ENCODE measurements at regions of chr10 and their contacts with region 1.

Region 1: DNA sequence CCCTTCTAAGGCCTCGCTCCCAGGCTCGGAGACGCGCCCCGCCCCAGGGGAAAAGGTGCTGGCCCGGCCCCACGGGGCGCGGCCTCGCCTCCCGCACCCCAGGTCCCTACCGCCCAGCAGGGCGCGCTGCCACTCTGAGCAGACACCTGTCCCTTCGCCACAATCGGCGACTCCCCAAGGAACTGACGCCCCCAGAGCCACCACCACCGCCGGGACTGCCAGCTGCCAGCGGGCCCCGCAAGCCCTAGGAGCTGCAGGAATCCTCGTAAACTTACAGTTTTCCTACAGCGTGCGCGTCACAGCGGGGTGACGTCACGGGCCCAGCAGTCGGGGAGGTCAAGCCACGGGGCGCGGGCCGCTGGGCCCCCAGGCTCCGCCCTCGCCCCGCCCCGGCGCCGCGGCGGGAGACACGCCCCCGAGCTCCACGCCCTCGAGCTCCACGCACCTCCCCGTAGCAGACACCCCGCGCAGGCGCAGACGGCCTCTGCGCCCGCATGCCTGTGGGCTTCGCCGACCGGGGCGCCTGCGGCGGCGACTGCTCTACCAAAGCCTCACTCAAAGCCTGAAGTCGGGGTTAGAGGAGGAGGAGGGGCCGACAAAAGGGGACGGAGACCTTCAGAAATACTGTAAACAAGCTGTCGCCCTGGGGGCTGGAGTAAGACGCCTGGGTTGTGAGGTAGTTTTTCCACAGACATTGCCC is at the start of gene ZNF438:
- DNase-seq: peak; percentile 95
- H3K4me3 Mint-ChIP-seq: peak within 1 kb of the TSS; percentile 85
- H3K27ac Mint-ChIP-seq: peak within 1 kb of the TSS; percentile 98
- H3K4me1 Mint-ChIP-seq: peaks cover 29% of the 10 kb centered on the region
- H3K27me3 Mint-ChIP-seq: no peaks in the 10 kb centered on the region
- total RNA-seq, gene ZNF438: 6.3 to 6.5 TPM

Region 2: DNA sequence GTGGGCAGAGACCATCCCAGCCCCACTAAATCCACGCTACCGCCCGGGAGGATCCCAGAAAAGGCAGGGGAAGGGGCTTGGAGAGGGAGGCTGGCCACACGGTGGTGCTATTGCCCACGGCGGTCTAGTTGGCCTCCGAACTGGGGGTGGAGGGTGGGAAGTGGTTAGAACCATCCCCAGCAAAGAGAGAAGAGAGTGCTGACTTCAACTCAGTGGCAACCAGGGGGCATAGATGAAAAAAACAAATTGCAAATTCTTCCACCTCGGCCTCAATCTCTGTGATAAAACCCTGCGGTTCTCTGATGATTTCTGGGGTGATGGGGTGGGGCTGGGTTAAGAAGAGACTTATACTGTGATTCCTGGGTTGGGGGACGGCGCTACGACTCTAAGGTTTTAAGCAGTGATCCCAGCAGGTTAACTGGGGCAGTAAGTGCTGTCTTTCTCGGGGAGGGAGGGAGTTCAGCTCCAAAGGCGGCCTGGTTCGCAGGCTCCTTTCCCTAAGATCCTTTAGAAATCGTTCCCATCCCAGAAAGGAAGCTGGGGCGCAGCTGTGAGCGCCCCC is 247.7 kb before region 1 on chr10:
- CTCF ChIA-PET with region 1: interaction called, 22 read pairs
- POLR2A ChIA-PET with region 1: interaction called, 20 read pairs
- DNase-seq: peak; percentile 88
- H3K4me3 Mint-ChIP-seq: peak overlapping the region; percentile 73
- H3K27ac Mint-ChIP-seq: peak overlapping the region; percentile 79
- H3K4me1 Mint-ChIP-seq: peaks cover 33% of the 10 kb centered on the region
- H3K27me3 Mint-ChIP-seq: peaks cover 4% of the 10 kb centered on the region

Region 3: DNA sequence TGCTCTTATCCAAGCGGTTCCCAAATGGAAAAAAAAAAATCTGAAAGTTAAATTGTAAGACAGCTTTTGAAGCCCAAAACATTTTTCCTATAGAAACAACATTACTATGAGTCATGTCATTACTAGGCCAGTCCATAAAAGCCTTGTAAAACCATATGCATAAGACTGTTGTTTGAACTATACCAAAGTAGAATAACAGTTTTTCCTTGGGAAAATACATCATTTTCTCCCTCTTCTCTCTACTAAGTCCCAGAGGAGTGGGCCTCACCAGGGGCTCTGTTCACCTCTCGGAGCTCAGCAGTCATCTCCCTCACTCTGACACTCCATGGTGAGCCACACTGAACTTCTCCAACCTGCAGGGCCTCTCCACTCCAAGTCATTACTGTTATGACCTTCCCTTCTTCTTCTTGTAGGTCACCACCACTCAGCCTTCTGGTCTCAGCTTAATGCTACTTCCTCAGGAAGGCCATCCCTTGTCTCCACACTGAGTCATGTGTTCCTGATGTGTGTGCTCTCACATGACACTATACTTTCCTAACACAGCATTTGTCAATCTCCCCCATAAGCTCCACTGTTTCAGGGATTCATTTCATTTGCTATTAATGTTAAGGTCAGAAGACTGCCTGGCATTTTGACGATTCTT is 32.5 kb before region 1 on chr10:
- CTCF ChIA-PET with region 1: interaction called, 25 read pairs
- POLR2A ChIA-PET with region 1: interaction called, 37 read pairs
- DNase-seq: peak; percentile 22
- H3K4me3 Mint-ChIP-seq: peak overlapping the region; percentile 74
- H3K27ac Mint-ChIP-seq: peak overlapping the region; percentile 80
- H3K4me1 Mint-ChIP-seq: peaks cover 46% of the 10 kb centered on the region
- H3K27me3 Mint-ChIP-seq: no peaks in the 10 kb centered on the region

Region 4: GRCh38 chr10:31017534-31018355 is 14.0 kb before region 1 on chr10:
- CTCF ChIA-PET with region 1: interaction called, 17 read pairs
- POLR2A ChIA-PET with region 1: interaction called, 7 read pairs
- DNase-seq: no peak
- H3K4me3 Mint-ChIP-seq: no peak overlapping the region
- H3K27ac Mint-ChIP-seq: no peak overlapping the region
- H3K4me1 Mint-ChIP-seq: peaks cover 4% of the 10 kb centered on the region
- H3K27me3 Mint-ChIP-seq: no peaks in the 10 kb centered on the region

Region 5: GRCh38 chr10:31318854-31319601 is 287.3 kb after region 1 on chr10 and contains the start of gene ZEB1:
- CTCF ChIA-PET with region 1: interaction called, 6 read pairs
- POLR2A ChIA-PET with region 1: interaction called, 13 read pairs
- DNase-seq: peak; percentile 93
- H3K4me3 Mint-ChIP-seq: peak within 1 kb of the TSS; percentile 93
- H3K27ac Mint-ChIP-seq: peak within 1 kb of the TSS; percentile 97
- H3K4me1 Mint-ChIP-seq: peaks cover 49% of the 10 kb centered on the region
- H3K27me3 Mint-ChIP-seq: no peaks in the 10 kb centered on the region
- total RNA-seq, gene ZEB1: 50.4 to 51.6 TPM

Region 6: GRCh38 chr10:31437959-31438358 is 406.3 kb after region 1 on chr10:
- CTCF ChIA-PET with region 1: no interaction called
- POLR2A ChIA-PET with region 1: no interaction called
- DNase-seq: no peak
- H3K4me3 Mint-ChIP-seq: no peak overlapping the region
- H3K27ac Mint-ChIP-seq: no peak overlapping the region
- H3K4me1 Mint-ChIP-seq: no peaks in the 10 kb centered on the region
- H3K27me3 Mint-ChIP-seq: no peaks in the 10 kb centered on the region